ENCODE measurements at regions of chrX and their contacts with region 1.

Region 1: DNA sequence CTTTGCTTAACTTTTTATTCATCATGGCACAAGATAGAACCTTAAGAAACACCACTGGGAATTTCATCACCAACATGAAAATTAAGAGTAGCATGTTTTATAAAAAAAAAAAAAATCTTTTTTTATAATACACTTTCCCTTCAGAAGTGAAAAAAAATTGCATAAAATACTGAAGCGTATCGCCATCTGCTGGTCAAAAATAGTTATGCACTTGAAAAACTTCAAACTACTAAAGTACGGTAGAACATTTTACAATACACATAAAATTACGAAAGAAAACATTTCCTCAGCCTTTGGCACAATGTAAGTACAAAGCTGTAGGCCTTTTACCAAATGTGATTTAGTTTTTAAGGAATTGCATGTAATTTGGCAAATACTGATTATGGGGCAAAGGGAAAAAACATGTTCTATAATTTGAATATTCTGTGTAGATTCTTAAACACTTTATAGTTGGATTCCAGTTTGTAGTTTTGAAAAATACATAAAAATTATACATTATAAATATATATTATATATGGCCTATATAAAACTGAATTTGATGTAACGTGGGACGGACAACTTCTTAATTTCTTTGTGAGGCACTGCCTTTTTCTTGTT is 26.5 kb downstream of the HCCS start:
- DNase-seq: no peak
- H3K4me3 Mint-ChIP-seq: no peak overlapping the region
- H3K27ac Mint-ChIP-seq: no peak overlapping the region
- H3K4me1 Mint-ChIP-seq: peaks cover 2% of the 10 kb centered on the region
- H3K27me3 Mint-ChIP-seq: peaks cover 5% of the 10 kb centered on the region

Region 2: GRCh38 chrX:10615931-10616775 is 521.5 kb before region 1 on chrX:
- CTCF ChIA-PET with region 1: no interaction called
- intact Hi-C with region 1: loop called (anchors 5 kb)
- DNase-seq: peak; percentile 13
- H3K4me3 Mint-ChIP-seq: no peak overlapping the region
- H3K27ac Mint-ChIP-seq: no peak overlapping the region
- H3K4me1 Mint-ChIP-seq: peaks cover 6% of the 10 kb centered on the region
- H3K27me3 Mint-ChIP-seq: peaks cover 27% of the 10 kb centered on the region

Region 3: GRCh38 chrX:11148401-11148800 is 10.8 kb after region 1 on chrX:
- CTCF ChIA-PET with region 1: no interaction called
- intact Hi-C with region 1: no loop called
- DNase-seq: no peak
- H3K4me3 Mint-ChIP-seq: no peak overlapping the region
- H3K27ac Mint-ChIP-seq: no peak overlapping the region
- H3K4me1 Mint-ChIP-seq: peaks cover 2% of the 10 kb centered on the region
- H3K27me3 Mint-ChIP-seq: peaks cover 2% of the 10 kb centered on the region

Measured in activated naive CD4-positive, alpha-beta T cell treated with anti-CD3 and anti-CD28 coated beads for 36 hours (primary cell).